H1 (cell line): ENCODE measurements at regions of chr16 and their contacts with region 1.

Region 1: GRCh38 chr16:67672739-67673662 is 6.4 kb downstream of the C16orf86 start:
- DNase-seq: peak in 1 of 2 experiments; percentile 87
- H3K4me3 ChIP-seq: no peak overlapping the region
- H3K27ac ChIP-seq: no peak overlapping the region
- H3K4me1 ChIP-seq: peaks cover 0 to 5% (median 2%) of the 10 kb centered on the region in 4 experiments; a peak in 3 of 7 replicates
- H3K27me3 ChIP-seq: no peaks in the 10 kb centered on the region; a peak in 1 of 7 replicates
- CTCF ChIP-seq: peak; percentile 76 to 90 (median 89)
- EP300 ChIP-seq: no peak
- POLR2A ChIP-seq: no peak
- RAD21 ChIP-seq: peak; percentile 92 to 94

Region 2: GRCh38 chr16:67653128-67653786 is 19.7 kb before region 1 on chr16:
- CTCF ChIA-PET with region 1: interaction called, 202 read pairs
- POLR2A ChIA-PET with region 1: interaction called, 4 read pairs
- DNase-seq: no peak
- H3K4me3 ChIP-seq: peak overlapping the region; percentile 47 to 76 (median 58)
- H3K27ac ChIP-seq: no peak overlapping the region
- H3K4me1 ChIP-seq: peaks cover 0 to 18% (median 5%) of the 10 kb centered on the region in 4 experiments; a peak in 5 of 7 replicates
- H3K27me3 ChIP-seq: peaks cover 0 to 23% (median 17%) of the 10 kb centered on the region in 4 experiments; a peak in 4 of 7 replicates
- CTCF ChIP-seq: peak; percentile 14 to 40 (median 24); a peak in 3 of 4 replicates
- EP300 ChIP-seq: no peak
- POLR2A ChIP-seq: no peak
- RAD21 ChIP-seq: no peak

Region 3: GRCh38 chr16:67685388-67686112 is 12.5 kb after region 1 on chr16:
- CTCF ChIA-PET with region 1: interaction called, 45 read pairs
- POLR2A ChIA-PET with region 1: no interaction called
- DNase-seq: no peak
- H3K4me3 ChIP-seq: no peak overlapping the region
- H3K27ac ChIP-seq: no peak overlapping the region
- H3K4me1 ChIP-seq: no peaks in the 10 kb centered on the region
- H3K27me3 ChIP-seq: no peaks in the 10 kb centered on the region
- CTCF ChIP-seq: no peak
- EP300 ChIP-seq: no peak
- POLR2A ChIP-seq: no peak
- RAD21 ChIP-seq: no peak

Region 4: GRCh38 chr16:67708368-67708861 is 35.4 kb after region 1 on chr16:
- CTCF ChIA-PET with region 1: interaction called, 11 read pairs
- POLR2A ChIA-PET with region 1: interaction called, 4 read pairs
- DNase-seq: no peak
- H3K4me3 ChIP-seq: no peak overlapping the region
- H3K27ac ChIP-seq: no peak overlapping the region
- H3K4me1 ChIP-seq: peaks cover 0 to 7% (median 3%) of the 10 kb centered on the region in 4 experiments; a peak in 2 of 7 replicates
- H3K27me3 ChIP-seq: no peaks in the 10 kb centered on the region
- CTCF ChIP-seq: no peak
- EP300 ChIP-seq: no peak
- POLR2A ChIP-seq: no peak
- RAD21 ChIP-seq: no peak

Region 5: DNA sequence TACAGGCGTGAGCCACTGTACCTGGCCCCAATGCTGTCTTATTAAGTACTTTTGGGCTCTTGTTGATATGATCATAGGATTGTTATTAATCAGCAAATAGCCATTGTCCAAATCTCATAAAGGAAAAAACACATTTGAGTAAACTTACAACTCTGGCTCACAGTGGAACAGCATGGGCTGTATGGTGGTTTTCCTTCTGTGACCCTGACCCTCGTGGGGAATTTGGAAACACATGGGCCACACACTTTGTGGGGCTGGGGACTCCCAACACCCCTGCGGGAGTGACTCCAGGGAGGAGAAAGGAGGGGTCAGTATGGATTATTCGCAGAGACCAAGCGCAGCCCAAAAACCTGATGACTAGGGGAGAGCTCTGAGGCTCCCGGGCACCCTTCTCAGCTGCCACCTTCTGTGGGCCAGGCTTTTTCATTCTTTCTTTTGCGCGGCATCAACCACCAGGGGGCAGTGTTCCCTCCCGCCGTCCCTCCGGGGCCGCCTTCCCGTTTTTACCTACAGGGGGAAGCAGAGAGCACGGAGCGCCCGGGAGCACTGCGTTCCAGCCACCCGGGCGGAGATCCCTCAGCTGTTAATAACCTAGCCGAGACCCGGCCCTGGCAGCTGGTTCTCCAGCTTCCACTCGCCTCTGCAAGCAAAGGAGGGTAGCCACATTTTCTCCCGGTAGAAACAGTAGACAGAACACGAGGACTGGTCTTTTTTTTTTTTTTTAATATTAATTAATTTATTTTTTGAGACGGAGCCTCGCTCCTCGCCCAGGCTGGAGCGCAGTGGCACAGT is 143.4 kb after region 1 on chr16:
- CTCF ChIA-PET with region 1: interaction called, 11 read pairs
- POLR2A ChIA-PET with region 1: interaction called, 3 read pairs
- DNase-seq: peak; percentile 25 to 99
- H3K4me3 ChIP-seq: no peak overlapping the region
- H3K27ac ChIP-seq: no peak overlapping the region
- H3K4me1 ChIP-seq: no peaks in the 10 kb centered on the region
- H3K27me3 ChIP-seq: no peaks in the 10 kb centered on the region; a peak in 1 of 7 replicates
- CTCF ChIP-seq: peak; percentile 98 to 100 (median 99)
- EP300 ChIP-seq: no peak
- POLR2A ChIP-seq: no peak
- RAD21 ChIP-seq: peak; percentile 78 to 86

Region 6: GRCh38 chr16:67841764-67842508 is 168.9 kb after region 1 on chr16 and contains the start of gene THAP11:
- CTCF ChIA-PET with region 1: interaction called, 24 read pairs
- POLR2A ChIA-PET with region 1: interaction called, 4 read pairs
- DNase-seq: peak; percentile 91 to 97
- H3K4me3 ChIP-seq: peak within 1 kb of the TSS; percentile 84 to 97 (median 95)
- H3K27ac ChIP-seq: peak within 1 kb of the TSS; percentile 97
- H3K4me1 ChIP-seq: peaks cover 8 to 32% (median 17%) of the 10 kb centered on the region in 4 experiments
- H3K27me3 ChIP-seq: no peaks in the 10 kb centered on the region
- CTCF ChIP-seq: peak; percentile 81 to 94 (median 87)
- EP300 ChIP-seq: no peak
- POLR2A ChIP-seq: peak; percentile 83 to 93
- RAD21 ChIP-seq: peak; percentile 24 to 38; a peak in 3 of 4 replicates
- total RNA-seq, gene THAP11: 54.8 and 56.4 TPM in 2 replicates

Region 7: GRCh38 chr16:67928561-67929364 is 255.8 kb after region 1 on chr16:
- CTCF ChIA-PET with region 1: interaction called, 15 read pairs
- POLR2A ChIA-PET with region 1: no interaction called
- DNase-seq: peak in 1 of 2 experiments; percentile 91
- H3K4me3 ChIP-seq: no peak overlapping the region
- H3K27ac ChIP-seq: no peak overlapping the region
- H3K4me1 ChIP-seq: peaks cover 0 to 8% (median 4%) of the 10 kb centered on the region in 4 experiments; a peak in 5 of 7 replicates
- H3K27me3 ChIP-seq: no peaks in the 10 kb centered on the region
- CTCF ChIP-seq: peak; percentile 96 to 100 (median 96)
- EP300 ChIP-seq: no peak
- POLR2A ChIP-seq: no peak
- RAD21 ChIP-seq: peak; percentile 94